ENCODE measurements at regions of chr12 and their contacts with region 1.

Region 1: GRCh38 chr12:93979189-93979588 is 169.2 kb upstream of the PLXNC1 start:
- DNase-seq: peak; percentile 80
- H3K4me3 Mint-ChIP-seq: no peak overlapping the region
- H3K27ac Mint-ChIP-seq: no peak overlapping the region
- H3K4me1 Mint-ChIP-seq: peaks cover 34% of the 10 kb centered on the region
- H3K27me3 Mint-ChIP-seq: peaks cover 6% of the 10 kb centered on the region

Region 2: DNA sequence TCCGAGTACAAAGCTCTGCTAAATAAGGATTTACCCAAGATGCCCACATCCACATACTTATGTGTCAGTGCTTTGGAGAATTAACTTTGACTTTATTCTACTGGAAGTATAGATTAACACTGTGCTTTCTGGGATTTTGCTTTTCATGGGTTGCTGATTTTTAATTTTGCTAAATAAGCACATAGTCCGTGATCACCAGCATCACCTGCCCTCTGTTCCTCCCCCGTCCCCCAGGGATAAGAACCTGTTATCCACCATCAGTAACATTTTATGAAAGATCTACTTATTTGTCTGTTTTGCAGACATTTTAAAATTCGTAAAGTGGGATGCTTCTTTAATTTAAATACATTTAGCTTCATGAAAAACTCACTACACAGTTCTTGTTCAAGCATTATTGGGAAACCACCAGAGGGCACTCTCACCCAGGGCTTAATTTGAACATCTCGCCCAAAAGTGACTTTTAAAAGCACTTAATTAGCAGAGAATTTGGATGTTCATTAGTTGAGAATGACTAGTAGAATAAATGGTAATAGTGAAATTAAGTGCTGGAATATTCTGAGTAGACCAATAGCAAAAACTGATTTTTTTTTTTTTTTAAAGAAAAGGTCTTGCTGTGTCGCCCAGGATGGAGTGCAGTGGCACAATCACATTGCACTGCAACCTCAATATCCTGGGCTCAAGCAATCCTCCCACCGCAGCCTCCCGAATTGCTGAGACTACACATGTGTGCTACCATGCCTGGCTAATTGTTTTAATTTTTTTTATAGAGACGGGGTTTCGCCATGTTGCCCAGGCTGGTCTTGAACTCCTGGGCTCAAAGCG is 476.2 kb before region 1 on chr12:
- intact Hi-C with region 1: loop called (anchors 2 kb)
- DNase-seq: peak; percentile 90
- H3K4me3 Mint-ChIP-seq: no peak overlapping the region
- H3K27ac Mint-ChIP-seq: no peak overlapping the region
- H3K4me1 Mint-ChIP-seq: peaks cover 18% of the 10 kb centered on the region
- H3K27me3 Mint-ChIP-seq: no peaks in the 10 kb centered on the region

Region 3: GRCh38 chr12:93766796-93767523 is 212.2 kb before region 1 on chr12:
- intact Hi-C with region 1: loop called (anchors 1 kb)
- DNase-seq: peak; percentile 85
- H3K4me3 Mint-ChIP-seq: peak overlapping the region; percentile 31
- H3K27ac Mint-ChIP-seq: no peak overlapping the region
- H3K4me1 Mint-ChIP-seq: peaks cover 40% of the 10 kb centered on the region
- H3K27me3 Mint-ChIP-seq: no peaks in the 10 kb centered on the region

Region 4: DNA sequence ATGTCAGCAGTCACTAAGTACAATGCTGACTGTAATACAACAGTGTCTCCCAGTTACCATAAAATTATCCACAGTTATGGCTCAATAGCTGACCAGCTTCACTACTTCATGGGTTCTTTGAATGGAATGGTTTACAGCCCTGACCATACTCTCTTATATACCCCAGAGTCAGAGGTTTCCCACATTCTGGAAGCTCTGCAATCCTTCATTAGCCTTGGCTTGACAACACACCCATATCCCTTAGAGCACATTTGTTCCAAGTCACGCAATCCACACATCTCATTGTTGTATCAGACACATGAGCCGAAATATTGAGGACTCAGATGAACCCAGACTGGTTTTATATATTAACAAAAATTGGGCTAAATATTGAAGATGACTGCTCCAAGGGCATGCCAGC is 40.3 kb before region 1 on chr12:
- intact Hi-C with region 1: no loop called
- DNase-seq: no peak
- H3K4me3 Mint-ChIP-seq: no peak overlapping the region
- H3K27ac Mint-ChIP-seq: no peak overlapping the region
- H3K4me1 Mint-ChIP-seq: peaks cover 2% of the 10 kb centered on the region
- H3K27me3 Mint-ChIP-seq: no peaks in the 10 kb centered on the region

Region 5: DNA sequence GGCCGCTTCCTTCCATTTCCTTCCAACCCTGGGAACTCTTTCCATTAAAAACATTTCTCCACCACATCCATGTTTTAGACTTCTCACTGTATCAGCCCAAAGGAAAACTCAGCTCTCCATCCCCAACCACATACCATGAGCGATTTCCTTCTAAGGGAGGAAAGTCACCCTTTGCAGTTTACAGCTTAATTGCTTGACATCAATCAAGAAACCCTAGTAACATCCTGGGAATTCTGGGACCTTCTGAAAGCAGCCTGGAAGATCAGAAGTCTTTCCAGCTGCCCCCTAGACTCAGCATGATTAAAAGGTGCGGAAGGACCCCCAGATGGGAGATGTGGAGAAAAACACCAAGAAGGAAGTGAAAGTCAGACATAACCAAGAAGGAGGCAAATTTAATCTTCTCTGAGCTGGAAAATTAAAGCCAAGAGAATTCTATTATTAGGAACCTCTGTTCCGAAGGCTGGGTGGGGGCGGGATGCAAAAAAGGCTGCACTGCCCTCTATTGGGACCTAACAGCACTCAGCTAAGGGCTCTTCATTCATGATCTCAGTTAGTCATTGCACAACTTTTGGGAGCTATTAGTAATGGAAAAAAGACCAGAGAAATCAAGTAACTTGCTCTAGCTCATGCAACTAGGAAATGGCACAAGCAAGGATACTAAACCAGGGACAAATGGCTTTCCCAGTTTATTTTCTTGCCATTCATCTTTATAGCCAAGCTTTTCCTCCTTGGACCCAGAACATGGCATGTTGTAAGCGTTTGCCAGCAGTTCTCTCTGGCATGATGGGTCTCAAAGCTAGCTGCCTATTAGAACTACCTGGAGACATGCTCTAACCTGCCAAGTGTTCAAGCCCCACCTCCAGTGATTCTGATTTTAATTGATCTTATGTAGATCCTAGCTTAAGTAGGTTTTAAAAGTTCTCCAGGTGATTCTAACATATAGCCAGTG is 96.1 kb after region 1 on chr12:
- intact Hi-C with region 1: loop called (anchors 5 kb)
- DNase-seq: no peak
- H3K4me3 Mint-ChIP-seq: no peak overlapping the region
- H3K27ac Mint-ChIP-seq: no peak overlapping the region
- H3K4me1 Mint-ChIP-seq: peaks cover 17% of the 10 kb centered on the region
- H3K27me3 Mint-ChIP-seq: peaks cover 3% of the 10 kb centered on the region

Region 6: DNA sequence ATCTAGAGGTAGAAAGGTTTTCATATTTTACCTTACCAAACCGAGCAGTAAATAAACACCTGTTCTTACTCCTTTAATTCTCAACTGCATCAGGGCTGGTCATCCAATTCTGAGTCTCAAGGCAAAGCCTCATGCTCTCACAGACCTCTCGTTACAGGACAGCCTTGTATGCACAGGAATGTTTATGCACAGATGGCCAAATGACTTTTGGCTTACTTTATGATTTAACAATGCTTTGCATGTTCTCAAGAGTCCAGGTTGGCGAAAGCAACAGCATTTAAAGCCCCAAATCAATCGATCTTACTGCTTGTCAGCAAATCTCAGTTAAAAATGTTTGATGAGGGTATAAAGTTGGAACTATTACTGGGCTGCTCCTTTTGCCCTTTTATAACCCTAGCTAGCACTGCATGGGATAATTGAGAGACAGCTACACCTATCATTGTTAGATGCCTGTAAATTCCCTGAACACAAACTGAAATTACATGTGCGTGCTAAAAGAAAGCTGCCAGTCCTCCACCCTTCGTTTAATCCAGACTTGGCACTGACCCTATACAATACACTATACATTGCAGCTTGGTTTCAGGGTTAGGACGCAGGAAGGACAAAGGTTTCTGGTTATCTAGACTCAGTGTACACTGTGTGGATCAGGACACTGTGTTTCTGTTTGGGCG is 607.5 kb after region 1 on chr12:
- intact Hi-C with region 1: no loop called
- DNase-seq: no peak
- H3K4me3 Mint-ChIP-seq: no peak overlapping the region
- H3K27ac Mint-ChIP-seq: no peak overlapping the region
- H3K4me1 Mint-ChIP-seq: peaks cover 2% of the 10 kb centered on the region
- H3K27me3 Mint-ChIP-seq: peaks cover 6% of the 10 kb centered on the region

Measured in activated CD4-positive, alpha-beta T cell treated with anti-CD3 and anti-CD28 coated beads, Interleukin-2, amount 10 ng/mL, durations not matched to agents 24 days and 14 days (primary cell).